ENCODE measurements at regions of chr2 and their contacts with region 1.

Region 1: DNA sequence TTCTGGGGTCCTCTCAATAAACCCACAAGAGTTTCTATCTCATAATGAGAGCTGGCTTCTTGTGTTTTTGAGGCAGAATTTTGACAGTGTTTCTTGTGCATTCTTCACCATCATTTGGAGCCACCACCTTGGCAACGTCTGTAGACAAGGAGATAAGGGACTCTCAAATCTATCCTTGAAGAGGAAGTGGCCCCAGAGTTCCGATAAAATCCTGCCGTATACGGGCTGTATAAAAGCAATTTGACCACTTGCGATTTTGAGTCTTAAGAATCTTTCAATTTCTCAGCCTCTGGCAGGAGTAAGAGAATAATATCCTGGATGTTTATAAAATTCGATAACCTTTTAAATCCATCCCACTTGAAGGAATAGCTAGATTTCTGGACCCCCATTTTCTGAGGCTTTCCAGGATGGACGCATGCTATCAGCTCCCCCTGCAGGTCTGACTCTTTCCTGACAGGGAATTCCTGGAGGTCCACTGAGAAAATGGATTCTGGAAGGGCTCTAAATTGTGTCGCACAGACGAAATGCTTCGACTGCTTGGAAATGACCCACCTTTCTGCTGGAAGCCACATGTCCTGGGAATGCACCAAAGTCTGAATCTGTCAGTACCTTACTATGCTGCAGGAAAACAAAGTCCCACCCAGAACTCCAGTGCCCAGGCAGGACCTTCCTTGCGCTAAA is 54.1 kb downstream of the E2F6 start:
- DNase-seq: peak; percentile 85
- H3K4me3 ChIP-seq: peak overlapping the region; percentile 46 to 49
- H3K27ac ChIP-seq: no peak overlapping the region
- H3K4me1 ChIP-seq: peaks cover 0 to 9% of the 10 kb centered on the region in 2 experiments; a peak in 1 of 4 replicates
- H3K27me3 ChIP-seq: no peaks in the 10 kb centered on the region
- CTCF ChIP-seq: peak; percentile 96
- EP300 ChIP-seq: no peak
- RAD21 ChIP-seq: peak; percentile 97

Region 2: GRCh38 chr2:11213090-11213638 is 198.7 kb before region 1 on chr2:
- CTCF ChIA-PET with region 1: interaction called, 13 read pairs
- POLR2A ChIA-PET with region 1: no interaction called
- DNase-seq: no peak
- H3K4me3 ChIP-seq: no peak overlapping the region
- H3K27ac ChIP-seq: peak overlapping the region in 1 of 2 experiments; percentile 12; a peak in 2 of 4 replicates
- H3K4me1 ChIP-seq: no peaks in the 10 kb centered on the region; a peak in 1 of 4 replicates
- H3K27me3 ChIP-seq: no peaks in the 10 kb centered on the region
- CTCF ChIP-seq: no peak
- EP300 ChIP-seq: peak in 1 of 2 experiments; percentile 50; a peak in 1 of 4 replicates
- RAD21 ChIP-seq: no peak

Region 3: GRCh38 chr2:11234309-11234708 is 177.6 kb before region 1 on chr2:
- CTCF ChIA-PET with region 1: interaction called, 159 read pairs
- POLR2A ChIA-PET with region 1: no interaction called
- DNase-seq: peak; percentile 31
- H3K4me3 ChIP-seq: no peak overlapping the region
- H3K27ac ChIP-seq: no peak overlapping the region
- H3K4me1 ChIP-seq: no peaks in the 10 kb centered on the region
- H3K27me3 ChIP-seq: no peaks in the 10 kb centered on the region
- CTCF ChIP-seq: peak; percentile 82
- EP300 ChIP-seq: no peak
- RAD21 ChIP-seq: peak; percentile 76

Region 4: DNA sequence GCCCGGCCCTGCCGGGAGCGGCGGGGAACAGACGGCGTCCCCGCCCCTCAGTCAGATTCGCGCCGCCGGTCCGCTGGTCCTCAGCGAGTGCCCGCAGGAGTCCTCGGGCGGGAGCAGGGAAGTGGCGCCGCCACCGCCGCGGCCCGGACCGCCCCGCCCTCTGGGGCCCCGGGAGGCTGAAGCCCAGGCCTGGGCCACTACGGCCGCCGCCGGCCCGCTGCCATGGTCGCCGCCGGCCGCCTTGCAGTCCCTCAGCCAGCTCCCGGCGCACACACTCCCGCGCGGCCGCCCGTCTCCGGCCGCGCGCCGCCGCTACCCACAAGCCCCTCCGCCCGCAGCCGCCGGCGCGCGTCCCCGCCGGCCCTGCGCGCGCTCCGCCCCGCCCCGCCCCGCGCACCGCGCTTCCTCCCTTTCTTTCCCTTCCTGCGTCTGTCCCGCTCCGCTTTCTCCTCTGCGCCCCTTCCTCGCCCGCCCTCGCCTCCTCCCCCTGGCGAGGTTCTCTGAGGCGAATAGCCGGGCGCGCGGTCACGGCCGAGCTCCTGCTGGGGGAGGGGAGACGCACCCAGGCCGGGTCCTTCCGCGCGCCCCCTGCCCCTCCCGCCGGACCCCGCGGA is 67.5 kb before region 1 on chr2 and contains the start of gene ROCK2:
- CTCF ChIA-PET with region 1: interaction called, 34 read pairs
- POLR2A ChIA-PET with region 1: interaction called, 8 read pairs
- DNase-seq: peak; percentile 98
- H3K4me3 ChIP-seq: peak within 1 kb of the TSS; percentile 88 to 99
- H3K27ac ChIP-seq: peak within 1 kb of the TSS; percentile 91 to 98
- H3K4me1 ChIP-seq: peaks cover 18 to 25% of the 10 kb centered on the region in 2 experiments
- H3K27me3 ChIP-seq: no peaks in the 10 kb centered on the region
- CTCF ChIP-seq: no peak
- EP300 ChIP-seq: 0 out of 4 replicates have a peak, but pooled peaks of 1 of the 2 experiments have one; percentile 12
- RAD21 ChIP-seq: no peak
- polyA plus RNA-seq, gene ROCK2: 4.2 and 4.9 TPM in 2 replicates

Region 5: DNA sequence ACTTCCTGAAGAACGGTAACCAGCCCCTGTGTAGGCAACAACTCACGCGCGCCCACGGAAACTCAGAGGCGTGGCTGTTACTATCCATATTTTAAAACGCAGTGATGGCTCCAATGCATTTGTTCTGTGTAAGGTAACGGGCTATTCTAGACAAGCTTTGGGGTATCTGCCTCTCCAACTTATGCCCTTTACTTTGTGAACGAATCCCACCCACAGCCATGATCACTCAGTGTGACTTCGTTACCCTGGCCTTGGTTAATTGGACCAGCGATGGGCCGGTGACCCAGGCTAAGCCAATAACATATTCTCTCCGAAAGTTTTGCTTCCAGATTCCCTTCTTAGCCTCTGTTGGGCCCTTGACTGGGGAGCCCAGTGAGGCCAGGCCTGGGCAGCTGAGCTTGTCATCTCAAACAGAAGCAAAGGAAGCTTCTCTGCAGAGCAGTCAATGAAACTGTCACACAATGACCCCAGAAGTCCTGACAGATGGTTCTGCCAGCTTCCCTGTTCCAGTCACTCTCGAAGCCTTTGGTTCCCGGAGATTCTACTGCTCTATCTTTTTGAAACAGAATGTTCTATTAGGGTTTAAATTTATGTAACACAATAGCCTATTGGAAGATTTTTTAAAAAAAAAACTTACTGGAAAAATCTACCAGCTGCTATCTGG is 36.8 kb before region 1 on chr2:
- CTCF ChIA-PET with region 1: interaction called, 13 read pairs
- POLR2A ChIA-PET with region 1: no interaction called
- DNase-seq: no peak
- H3K4me3 ChIP-seq: no peak overlapping the region
- H3K27ac ChIP-seq: peak overlapping the region; percentile 73 to 90; a peak in 3 of 4 replicates
- H3K4me1 ChIP-seq: peaks cover 14 to 27% of the 10 kb centered on the region in 2 experiments; a peak in 3 of 4 replicates
- H3K27me3 ChIP-seq: no peaks in the 10 kb centered on the region
- CTCF ChIP-seq: no peak
- EP300 ChIP-seq: no peak
- RAD21 ChIP-seq: no peak

Region 6: GRCh38 chr2:11396467-11397445 is 15.2 kb before region 1 on chr2:
- CTCF ChIA-PET with region 1: interaction called, 23 read pairs
- POLR2A ChIA-PET with region 1: no interaction called
- DNase-seq: peak; percentile 71
- H3K4me3 ChIP-seq: no peak overlapping the region
- H3K27ac ChIP-seq: no peak overlapping the region
- H3K4me1 ChIP-seq: peaks cover 2 to 14% of the 10 kb centered on the region in 2 experiments; a peak in 2 of 4 replicates
- H3K27me3 ChIP-seq: no peaks in the 10 kb centered on the region
- CTCF ChIP-seq: no peak
- EP300 ChIP-seq: no peak
- RAD21 ChIP-seq: no peak

Region 7: GRCh38 chr2:11437602-11438001 is 25.7 kb after region 1 on chr2:
- CTCF ChIA-PET with region 1: interaction called, 11 read pairs
- POLR2A ChIA-PET with region 1: no interaction called
- DNase-seq: peak; percentile 41
- H3K4me3 ChIP-seq: no peak overlapping the region; a peak in 1 of 4 replicates
- H3K27ac ChIP-seq: no peak overlapping the region
- H3K4me1 ChIP-seq: peaks cover 0 to 5% of the 10 kb centered on the region in 2 experiments; a peak in 1 of 4 replicates
- H3K27me3 ChIP-seq: no peaks in the 10 kb centered on the region
- CTCF ChIP-seq: no peak
- EP300 ChIP-seq: no peak; a peak in 1 of 4 replicates
- RAD21 ChIP-seq: no peak

Measured in SK-N-SH (cell line).